Ovary (tissue), 10 donors: ENCODE measurements at regions of chr4 and their contacts with region 1.

Region 1: GRCh38 chr4:14631806-14632440 is 370.4 kb upstream of the CPEB2 start:
- DNase-seq: no peak
- H3K4me3 ChIP-seq: no peak overlapping the region
- H3K27ac ChIP-seq: no peak overlapping the region
- H3K4me1 ChIP-seq: no peaks in the 10 kb centered on the region
- H3K27me3 ChIP-seq: no peaks in the 10 kb centered on the region
- CTCF ChIP-seq: no peak
- EP300 ChIP-seq: no peak
- POLR2A ChIP-seq: no peak

Region 2: GRCh38 chr4:14607578-14607977 is 24.3 kb before region 1 on chr4:
- intact Hi-C with region 1: loop called in 1 of 4 experiments (anchors 1 kb)
- DNase-seq: no peak
- H3K4me3 ChIP-seq: no peak overlapping the region
- H3K27ac ChIP-seq: no peak overlapping the region
- H3K4me1 ChIP-seq: peaks cover 1% of the 10 kb centered on the region
- H3K27me3 ChIP-seq: no peaks in the 10 kb centered on the region
- CTCF ChIP-seq: no peak
- EP300 ChIP-seq: no peak
- POLR2A ChIP-seq: no peak

Region 3: DNA sequence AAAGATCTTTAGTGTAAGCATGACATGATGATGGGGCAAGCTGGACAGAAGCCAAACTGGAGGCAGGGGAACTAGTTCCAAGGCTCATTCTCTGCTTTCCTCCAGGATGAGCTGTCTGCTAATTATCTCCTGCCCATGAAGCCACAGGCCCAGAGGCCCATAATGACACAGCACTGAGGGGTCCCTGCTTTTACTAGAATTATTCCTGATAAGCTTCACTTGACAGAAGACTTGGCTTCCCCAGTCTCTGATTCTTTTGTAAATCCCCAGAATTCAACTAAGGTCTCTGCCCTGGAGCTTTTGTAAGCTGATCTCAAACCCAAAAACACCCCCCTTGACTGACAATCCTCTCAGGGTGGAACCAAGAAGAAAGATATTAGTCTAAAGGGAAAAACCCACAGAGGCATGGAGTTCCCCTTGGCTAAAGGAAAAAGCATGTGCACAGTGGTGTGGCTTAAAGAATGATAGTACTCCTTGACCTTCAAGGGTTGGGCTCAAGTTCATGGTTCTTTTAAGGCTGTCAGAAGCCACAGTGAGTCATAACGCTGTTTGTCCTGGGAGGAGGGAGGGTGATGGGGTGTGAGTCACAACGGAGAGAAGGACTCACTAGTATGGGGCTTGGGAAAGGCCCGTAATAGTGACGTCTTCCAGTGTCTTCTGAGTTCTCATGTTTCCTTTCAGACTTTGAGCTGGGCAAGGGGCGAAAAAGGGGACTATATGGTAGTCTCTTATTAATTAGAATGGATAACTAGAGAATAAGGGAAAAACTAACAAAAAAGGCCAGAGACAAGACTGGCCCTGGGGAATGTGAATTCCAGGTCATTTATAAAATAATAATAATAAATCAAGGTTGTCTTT is 224.4 kb after region 1 on chr4:
- intact Hi-C with region 1: no loop called
- DNase-seq: peak in 4 of 5 donors; percentile 21 to 47 (median 34)
- H3K4me3 ChIP-seq: no peak overlapping the region
- H3K27ac ChIP-seq: no peak overlapping the region
- H3K4me1 ChIP-seq: no peaks in the 10 kb centered on the region
- H3K27me3 ChIP-seq: no peaks in the 10 kb centered on the region
- CTCF ChIP-seq: no peak
- EP300 ChIP-seq: no peak
- POLR2A ChIP-seq: no peak